ENCODE measurements at regions of chr14 and their contacts with region 1.

Region 1: DNA sequence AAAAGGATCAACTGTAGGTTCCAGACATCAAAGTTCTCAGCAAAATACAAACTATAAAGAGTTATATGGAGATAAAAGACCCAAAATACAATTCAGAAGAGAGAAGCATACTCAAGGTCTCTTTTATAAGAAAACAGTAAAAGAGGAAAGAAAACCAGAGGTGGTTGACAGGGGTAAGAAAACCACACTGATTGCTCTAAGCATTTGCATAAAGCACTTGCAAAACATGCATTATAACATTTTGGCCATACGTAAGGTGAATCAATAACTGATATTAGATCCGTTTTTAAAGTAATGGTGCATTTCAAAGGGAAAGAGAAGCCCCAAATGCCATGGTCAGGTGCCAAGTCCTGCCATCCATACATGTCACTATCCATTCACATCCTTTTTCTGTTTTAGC is 5.9 kb downstream of the DDHD1 start:
- DNase-seq: no peak
- ATAC-seq: no peak
- H3K4me3 ChIP-seq: no peak overlapping the region
- H3K4me3 Mint-ChIP-seq: peak overlapping the region; percentile 43
- H3K27ac ChIP-seq: no peak overlapping the region
- H3K27ac Mint-ChIP-seq: peak overlapping the region; percentile 47 to 83
- H3K4me1 ChIP-seq: peaks cover 26% of the 10 kb centered on the region
- H3K4me1 Mint-ChIP-seq: peaks cover 65 to 79% of the 10 kb centered on the region in 2 donors
- H3K27me3 ChIP-seq: no peaks in the 10 kb centered on the region
- H3K27me3 Mint-ChIP-seq: no peaks in the 10 kb centered on the region
- CTCF ChIP-seq: no peak

Region 2: DNA sequence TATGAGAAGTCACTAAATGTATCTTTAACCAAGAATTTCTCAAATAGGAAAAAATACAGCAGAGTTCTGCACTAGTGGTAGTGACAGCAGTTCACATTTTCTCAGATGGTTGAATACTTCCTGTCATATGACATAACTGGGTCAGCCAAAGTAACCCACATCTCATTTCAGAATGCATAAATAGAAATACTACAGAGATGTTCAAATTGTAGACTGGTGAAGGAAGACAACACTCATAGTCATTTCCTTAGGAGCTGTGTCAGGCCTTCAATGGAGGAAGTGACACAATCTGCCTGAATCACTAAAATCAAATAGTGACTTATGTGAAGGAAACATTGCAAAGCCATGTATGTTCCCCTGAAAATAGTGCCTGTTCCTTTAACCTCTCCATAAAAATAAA is 228.7 kb before region 1 on chr14:
- intact Hi-C with region 1: loop called (anchors 5 kb)
- DNase-seq: peak in 1 of 2 donors; percentile 81
- ATAC-seq: peak; percentile 89 to 97 (median 95)
- H3K4me3 ChIP-seq: no peak overlapping the region
- H3K4me3 Mint-ChIP-seq: peak overlapping the region; percentile 25
- H3K27ac ChIP-seq: peak overlapping the region; percentile 94
- H3K27ac Mint-ChIP-seq: peak overlapping the region; percentile 93
- H3K4me1 ChIP-seq: peaks cover 25% of the 10 kb centered on the region
- H3K4me1 Mint-ChIP-seq: peaks cover 52 to 62% of the 10 kb centered on the region in 2 donors
- H3K27me3 ChIP-seq: no peaks in the 10 kb centered on the region
- H3K27me3 Mint-ChIP-seq: no peaks in the 10 kb centered on the region
- CTCF ChIP-seq: no peak

Region 3: DNA sequence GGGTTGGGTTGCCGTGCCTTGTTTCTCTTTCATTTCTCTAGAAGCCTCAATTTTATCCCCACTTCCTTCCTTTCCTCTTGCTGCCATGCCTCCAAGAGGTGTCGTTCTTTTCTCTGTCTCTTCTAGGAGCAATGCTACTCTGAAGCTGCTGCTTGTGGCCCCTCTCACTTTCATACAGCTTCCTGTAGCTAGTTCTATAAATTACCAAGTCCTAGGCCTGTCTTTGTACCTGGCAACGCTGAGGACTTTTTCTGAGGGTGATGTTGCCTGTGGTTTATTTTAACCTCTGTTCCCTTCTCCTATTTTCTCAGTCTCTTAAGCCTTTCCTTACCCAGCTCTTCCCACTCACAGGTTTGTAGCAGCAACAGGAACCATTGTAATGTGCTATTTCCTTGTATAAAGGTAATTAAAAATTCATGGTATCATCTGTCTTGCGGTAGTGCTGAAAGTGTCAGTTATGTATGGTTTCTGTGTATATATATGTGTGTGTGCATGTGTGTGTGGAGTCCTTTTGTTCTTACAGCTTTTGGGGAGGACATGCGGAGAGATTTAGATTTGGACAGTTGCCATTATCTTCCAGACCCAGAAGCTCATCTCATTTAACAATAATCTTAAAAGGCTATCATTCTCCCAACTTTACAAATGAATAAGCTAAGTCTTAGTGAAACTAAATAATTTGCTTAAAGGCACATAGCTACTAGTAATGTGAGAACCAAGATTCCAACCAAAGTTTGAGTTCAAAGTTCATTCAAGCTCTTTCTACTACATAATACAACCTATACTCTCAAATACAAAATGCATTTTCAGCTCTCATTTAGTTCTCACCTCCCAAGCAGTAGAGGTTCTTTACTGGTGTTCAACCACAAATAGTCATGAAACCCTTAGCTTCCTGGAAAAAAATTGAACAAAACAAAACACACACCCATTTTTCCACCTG is 37.8 kb before region 1 on chr14:
- intact Hi-C with region 1: no loop called
- DNase-seq: peak in 1 of 2 donors; percentile 83
- ATAC-seq: peak; percentile 78 to 85 (median 84)
- H3K4me3 ChIP-seq: peak overlapping the region; percentile 36
- H3K4me3 Mint-ChIP-seq: no peak overlapping the region
- H3K27ac ChIP-seq: peak overlapping the region; percentile 85
- H3K27ac Mint-ChIP-seq: no peak overlapping the region
- H3K4me1 ChIP-seq: peaks cover 31% of the 10 kb centered on the region
- H3K4me1 Mint-ChIP-seq: peaks cover 10 to 11% of the 10 kb centered on the region in 2 donors
- H3K27me3 ChIP-seq: no peaks in the 10 kb centered on the region
- H3K27me3 Mint-ChIP-seq: no peaks in the 10 kb centered on the region
- CTCF ChIP-seq: no peak

Region 4: GRCh38 chr14:53126731-53127130 is 20.5 kb before region 1 on chr14:
- intact Hi-C with region 1: loop called (anchors 2 kb)
- DNase-seq: no peak
- ATAC-seq: peak; percentile 45 to 63 (median 54)
- H3K4me3 ChIP-seq: peak overlapping the region; percentile 21
- H3K4me3 Mint-ChIP-seq: peak overlapping the region; percentile 94
- H3K27ac ChIP-seq: peak overlapping the region; percentile 80
- H3K27ac Mint-ChIP-seq: no peak overlapping the region
- H3K4me1 ChIP-seq: peaks cover 5% of the 10 kb centered on the region
- H3K4me1 Mint-ChIP-seq: peaks cover 11 to 32% of the 10 kb centered on the region in 2 donors
- H3K27me3 ChIP-seq: no peaks in the 10 kb centered on the region
- H3K27me3 Mint-ChIP-seq: no peaks in the 10 kb centered on the region
- CTCF ChIP-seq: no peak